PC-3 (cell line): ENCODE measurements at regions of chr20 and their contacts with region 1.

Region 1: GRCh38 chr20:58656831-58657230 is 5.7 kb downstream of the STX16 start:
- DNase-seq: no peak
- ATAC-seq: no peak
- H3K4me3 ChIP-seq: peak overlapping the region; percentile 16; the same call in 1 of the 2 replicates
- H3K27ac ChIP-seq: 0 out of 2 replicates have a peak overlapping the region, but pooled peaks have one; percentile 2
- H3K4me1 ChIP-seq: peaks cover 67% of the 10 kb centered on the region
- H3K27me3 ChIP-seq: no peaks in the 10 kb centered on the region
- CTCF ChIP-seq: no peak

Region 2: GRCh38 chr20:58677084-58677604 is 20.3 kb after region 1 on chr20:
- CTCF ChIA-PET with region 1: no interaction called
- POLR2A ChIA-PET with region 1: no interaction called
- intact Hi-C with region 1: loop called (anchors 2 kb)
- DNase-seq: no peak
- ATAC-seq: peak; percentile 19; the same call in 1 of the 2 replicates
- H3K4me3 ChIP-seq: no peak overlapping the region
- H3K27ac ChIP-seq: no peak overlapping the region
- H3K4me1 ChIP-seq: peaks cover 2% of the 10 kb centered on the region
- H3K27me3 ChIP-seq: no peaks in the 10 kb centered on the region
- CTCF ChIP-seq: no peak